Ascending aorta (tissue), 2 donors: ENCODE measurements at regions of chr4 and their contacts with region 1.

Region 1: DNA sequence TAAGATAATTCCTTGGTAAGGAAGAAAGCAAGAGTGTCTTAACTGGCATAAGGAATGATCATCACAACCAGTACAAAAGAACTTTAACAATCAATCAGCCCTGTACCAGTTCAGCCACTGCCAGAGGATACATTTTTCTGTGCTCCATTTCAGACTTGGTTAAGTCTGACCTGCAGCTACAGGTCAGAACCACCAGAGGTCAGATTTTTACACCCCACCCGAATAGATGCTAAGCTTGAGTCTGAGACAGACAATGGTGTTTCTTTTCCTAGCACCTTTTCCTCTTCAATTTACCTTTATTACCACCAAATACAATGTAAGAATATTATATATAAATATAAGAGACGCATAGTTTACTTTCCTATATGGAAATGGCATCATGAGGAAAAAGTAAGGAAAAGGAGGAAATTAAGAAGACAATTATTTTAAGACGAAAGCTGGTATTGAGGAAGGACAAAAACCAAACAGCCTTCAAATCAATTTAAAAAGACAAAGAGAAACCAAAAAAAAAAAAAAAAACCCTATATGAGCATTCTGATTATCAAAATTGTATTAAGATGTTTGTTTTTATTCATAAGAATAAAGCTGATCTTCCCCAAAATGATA is 215.3 kb upstream of the TTC29 start:
- DNase-seq: no peak
- H3K4me3 ChIP-seq: no peak overlapping the region
- H3K27ac ChIP-seq: no peak overlapping the region
- H3K4me1 ChIP-seq: no peaks in the 10 kb centered on the region
- H3K27me3 ChIP-seq: no peaks in the 10 kb centered on the region
- CTCF ChIP-seq: peak; percentile 37 to 86 (median 78)

Region 2: DNA sequence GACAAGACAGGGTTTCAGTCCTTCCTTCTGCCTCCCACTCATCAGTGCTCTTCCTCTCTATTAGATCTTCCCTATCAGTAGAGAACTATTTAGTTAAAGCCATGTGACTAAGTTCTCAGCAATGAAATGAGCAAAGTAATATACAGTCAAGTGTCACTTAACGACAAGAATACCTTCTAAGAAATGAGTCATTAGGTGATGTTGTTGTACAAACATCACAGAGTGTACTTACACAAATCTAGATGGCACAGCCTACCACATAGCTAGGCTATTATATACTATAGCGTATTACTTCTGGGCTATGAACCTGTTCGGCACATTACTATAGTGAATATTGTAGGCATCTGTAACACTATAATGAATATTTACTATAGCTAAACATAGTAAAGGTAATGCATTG is 451.1 kb before region 1 on chr4:
- intact Hi-C with region 1: no loop called
- DNase-seq: no peak
- H3K4me3 ChIP-seq: no peak overlapping the region
- H3K27ac ChIP-seq: no peak overlapping the region
- H3K4me1 ChIP-seq: no peaks in the 10 kb centered on the region
- H3K27me3 ChIP-seq: no peaks in the 10 kb centered on the region
- CTCF ChIP-seq: no peak

Region 3: DNA sequence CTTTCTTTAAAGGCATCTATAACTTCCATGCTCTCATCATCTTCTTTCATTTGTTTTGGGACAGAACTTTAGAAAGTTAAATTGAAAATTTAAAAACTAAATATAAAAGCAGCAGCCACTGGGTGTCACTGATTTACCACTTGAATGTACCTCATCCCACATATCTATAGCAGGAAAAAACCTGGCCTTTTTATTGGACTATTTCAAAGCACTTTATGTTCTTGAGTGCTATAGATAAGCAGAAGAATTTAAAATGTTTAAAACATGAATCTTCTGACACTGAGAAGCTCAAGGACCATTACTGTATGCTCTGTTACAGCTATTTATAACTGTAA is 50.0 kb before region 1 on chr4:
- intact Hi-C with region 1: loop called (anchors 5 kb)
- DNase-seq: no peak
- H3K4me3 ChIP-seq: no peak overlapping the region
- H3K27ac ChIP-seq: no peak overlapping the region
- H3K4me1 ChIP-seq: no peaks in the 10 kb centered on the region
- H3K27me3 ChIP-seq: no peaks in the 10 kb centered on the region
- CTCF ChIP-seq: peak in 1 of 3 experiments; percentile 26

Region 4: DNA sequence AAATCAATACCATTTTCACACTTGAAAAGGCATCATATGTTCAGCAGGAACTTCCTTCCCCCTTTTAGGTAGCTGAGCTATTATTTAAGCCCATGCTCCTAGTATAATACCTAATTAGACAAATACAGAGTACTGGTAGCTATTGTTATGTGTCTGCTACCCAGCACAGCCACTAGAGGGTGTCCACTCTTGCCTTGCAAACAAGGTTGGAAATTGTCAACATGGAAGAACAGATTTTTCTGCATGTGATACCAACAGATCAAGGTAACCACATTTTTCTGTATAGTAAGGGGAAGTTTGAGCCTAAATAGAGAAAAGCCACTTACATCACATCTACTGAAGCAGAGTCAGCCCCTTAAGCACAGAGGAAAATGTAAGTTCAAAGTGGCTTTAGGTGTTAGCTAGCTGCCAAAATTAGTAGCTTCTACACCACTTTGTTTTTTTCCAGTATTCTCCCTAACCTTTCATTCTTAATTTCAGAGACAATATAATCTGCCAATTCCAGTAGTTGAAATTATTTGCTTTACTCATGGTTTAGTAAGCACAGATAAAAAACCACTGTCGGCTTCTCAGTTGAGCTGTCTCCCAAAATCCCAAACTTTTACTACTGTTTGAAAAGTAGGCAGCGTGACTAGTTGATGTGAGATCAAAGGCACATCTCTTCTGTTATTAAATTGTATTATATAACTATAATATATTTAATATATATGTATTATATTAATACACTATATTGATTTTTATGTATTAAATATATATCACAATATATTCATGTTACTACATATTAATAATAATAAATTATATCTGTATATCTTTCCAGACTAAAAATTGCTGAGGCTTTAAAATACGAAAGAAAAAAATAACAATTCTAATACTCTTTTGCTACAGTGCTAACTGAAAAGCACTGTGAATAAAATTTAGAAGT is 358.1 kb after region 1 on chr4:
- intact Hi-C with region 1: loop called (anchors 2 kb)
- DNase-seq: no peak
- H3K4me3 ChIP-seq: no peak overlapping the region
- H3K27ac ChIP-seq: no peak overlapping the region
- H3K4me1 ChIP-seq: peaks cover 0 to 3% of the 10 kb centered on the region in 2 donors
- H3K27me3 ChIP-seq: no peaks in the 10 kb centered on the region
- CTCF ChIP-seq: peak; percentile 43 to 79 (median 77)